IMR-90 (cell line): ENCODE measurements at regions of chr16 and their contacts with region 1.

Region 1: GRCh38 chr16:74813109-74813641 is 38.6 kb upstream of the FA2H start:
- DNase-seq: peak; percentile 55
- ATAC-seq: peak; percentile 100
- H3K4me3 ChIP-seq: no peak overlapping the region
- H3K27ac ChIP-seq: no peak overlapping the region
- H3K4me1 ChIP-seq: no peaks in the 10 kb centered on the region
- H3K27me3 ChIP-seq: peaks cover 26% of the 10 kb centered on the region
- CTCF ChIP-seq: peak; percentile 82
- POLR2A ChIP-seq: no peak
- RAD21 ChIP-seq: peak; percentile 82

Region 2: GRCh38 chr16:74709441-74709877 is 103.7 kb before region 1 on chr16:
- CTCF ChIA-PET with region 1: interaction called, 8 read pairs
- POLR2A ChIA-PET with region 1: interaction called, 15 read pairs
- dilution Hi-C with region 1: no loop called
- in situ Hi-C with region 1: loop called (anchors 5 kb)
- intact Hi-C with region 1: loop called (anchors 1 kb)
- DNase-seq: peak; percentile 72
- ATAC-seq: peak; percentile 99
- H3K4me3 ChIP-seq: no peak overlapping the region
- H3K27ac ChIP-seq: no peak overlapping the region
- H3K4me1 ChIP-seq: no peaks in the 10 kb centered on the region
- H3K27me3 ChIP-seq: peaks cover 8% of the 10 kb centered on the region; the same call in 1 of the 2 replicates
- CTCF ChIP-seq: peak; percentile 98
- POLR2A ChIP-seq: 0 out of 2 replicates have a peak, but pooled peaks have one; percentile 29
- RAD21 ChIP-seq: peak; percentile 99

Region 3: GRCh38 chr16:74766729-74767128 is 46.4 kb before region 1 on chr16:
- CTCF ChIA-PET with region 1: no interaction called
- POLR2A ChIA-PET with region 1: no interaction called
- dilution Hi-C with region 1: no loop called
- in situ Hi-C with region 1: loop called (anchors 5 kb)
- intact Hi-C with region 1: no loop called
- DNase-seq: no peak
- ATAC-seq: no peak
- H3K4me3 ChIP-seq: no peak overlapping the region
- H3K27ac ChIP-seq: no peak overlapping the region
- H3K4me1 ChIP-seq: no peaks in the 10 kb centered on the region
- H3K27me3 ChIP-seq: peaks cover 23% of the 10 kb centered on the region
- CTCF ChIP-seq: no peak
- POLR2A ChIP-seq: no peak
- RAD21 ChIP-seq: no peak

Region 4: DNA sequence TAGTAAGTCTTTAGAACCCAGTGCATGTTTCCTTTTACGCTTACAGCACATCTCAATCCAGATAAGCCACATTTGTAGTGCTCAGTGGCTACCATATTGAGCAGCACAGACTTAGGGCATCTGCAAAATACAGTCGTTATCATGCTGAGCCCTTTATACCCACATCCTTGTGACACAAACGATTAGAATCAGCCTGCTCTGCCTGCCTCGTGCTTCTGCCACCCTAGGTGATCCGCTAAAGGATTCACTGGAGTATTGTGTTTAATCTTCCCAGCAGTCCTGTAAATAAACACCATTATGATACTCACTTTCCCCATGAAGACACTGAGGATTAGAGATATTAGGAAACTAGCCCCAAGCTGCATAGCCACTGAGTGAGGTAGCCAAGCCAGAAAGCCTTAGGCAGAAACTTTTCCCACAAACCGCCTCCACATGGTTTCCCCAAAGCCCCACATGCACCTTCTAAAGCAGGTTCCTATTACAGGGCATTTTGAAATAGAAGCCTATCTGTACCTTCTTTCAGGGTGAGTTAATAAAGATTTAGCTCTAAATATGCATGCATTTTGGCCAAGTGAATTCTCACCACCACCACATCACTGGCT is 12.9 kb after region 1 on chr16:
- CTCF ChIA-PET with region 1: interaction called, 4 read pairs
- POLR2A ChIA-PET with region 1: interaction called, 20 read pairs
- dilution Hi-C with region 1: no loop called
- in situ Hi-C with region 1: no loop called
- intact Hi-C with region 1: no loop called
- DNase-seq: no peak
- ATAC-seq: no peak
- H3K4me3 ChIP-seq: no peak overlapping the region
- H3K27ac ChIP-seq: no peak overlapping the region
- H3K4me1 ChIP-seq: no peaks in the 10 kb centered on the region
- H3K27me3 ChIP-seq: peaks cover 14% of the 10 kb centered on the region
- CTCF ChIP-seq: no peak
- POLR2A ChIP-seq: no peak
- RAD21 ChIP-seq: no peak